ENCODE measurements at regions of chrX and their contacts with region 1.

Region 1: DNA sequence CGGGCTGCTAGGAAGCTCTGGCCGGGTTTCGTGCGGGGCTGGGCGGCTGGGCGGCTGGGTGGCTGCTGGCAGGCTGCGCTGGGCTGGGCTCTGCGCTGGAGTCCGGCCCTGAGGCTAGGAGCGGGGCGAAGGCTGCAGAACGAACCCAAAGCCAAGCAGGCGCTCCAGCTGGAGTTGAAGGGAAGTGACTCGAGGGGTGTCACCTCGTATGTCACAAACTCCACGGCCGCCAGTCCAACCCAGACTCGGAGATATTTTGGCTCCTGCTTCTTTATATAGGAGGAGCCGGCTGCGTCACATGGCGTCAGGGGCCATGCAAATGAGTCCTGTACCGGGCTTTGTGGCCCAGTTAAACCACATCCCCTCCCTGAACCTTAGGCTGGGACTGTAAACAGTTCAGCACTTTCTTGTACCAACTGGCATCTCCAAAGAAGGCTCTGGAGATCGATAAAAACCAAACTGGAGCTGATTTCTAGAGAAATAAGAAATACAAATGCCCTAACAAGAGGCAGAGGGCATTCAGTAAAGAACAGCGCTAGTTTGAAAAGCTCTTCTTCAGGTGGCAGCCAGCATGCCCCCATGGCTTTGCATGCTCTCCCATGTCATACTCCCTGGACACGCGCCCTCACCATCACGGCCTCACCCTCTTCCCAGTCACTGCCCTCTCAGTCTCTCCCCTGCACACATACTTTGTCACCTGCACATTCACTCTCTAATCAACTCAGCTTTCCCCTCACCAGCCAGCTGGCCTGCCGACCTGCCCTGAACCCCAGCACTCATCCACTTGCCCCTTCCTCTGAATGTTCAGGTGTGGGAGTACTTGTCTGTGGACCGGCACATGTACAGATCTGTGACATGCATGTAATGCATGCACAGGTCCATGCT is 58.5 kb downstream of the TSC22D3 start:
- DNase-seq: peak; percentile 86 to 97 (median 92)
- H3K4me3 ChIP-seq: peak overlapping the region in 3 of 4 donors; percentile 40 to 83 (median 79)
- H3K27ac ChIP-seq: peak overlapping the region; percentile 72 to 98 (median 95)
- H3K4me1 ChIP-seq: peaks cover 22 to 49% of the 10 kb centered on the region in 2 donors
- H3K27me3 ChIP-seq: peaks cover 12% of the 10 kb centered on the region
- CTCF ChIP-seq: peak in 2 of 6 experiments; percentile 9 to 20
- POLR2A ChIP-seq: peak; percentile 98 to 99

Region 2: GRCh38 chrX:107576841-107577240 is 140.2 kb before region 1 on chrX:
- intact Hi-C with region 1: no loop called
- DNase-seq: no peak
- H3K4me3 ChIP-seq: no peak overlapping the region
- H3K27ac ChIP-seq: no peak overlapping the region
- H3K4me1 ChIP-seq: no peaks in the 10 kb centered on the region
- H3K27me3 ChIP-seq: no peaks in the 10 kb centered on the region
- CTCF ChIP-seq: no peak
- POLR2A ChIP-seq: no peak

Region 3: GRCh38 chrX:107672955-107673378 is 44.1 kb before region 1 on chrX:
- intact Hi-C with region 1: loop called in 1 of 2 experiments (anchors 5 kb)
- DNase-seq: peak; percentile 68 to 89 (median 81)
- H3K4me3 ChIP-seq: no peak overlapping the region
- H3K27ac ChIP-seq: peak overlapping the region in 4 of 5 donors; percentile 32 to 86 (median 73)
- H3K4me1 ChIP-seq: peaks cover 0 to 29% of the 10 kb centered on the region in 2 donors
- H3K27me3 ChIP-seq: no peaks in the 10 kb centered on the region
- CTCF ChIP-seq: peak; percentile 25 to 78 (median 72)
- POLR2A ChIP-seq: peak in 1 of 2 donors; percentile 34

Measured in adrenal gland (tissue), 19 donors.